ENCODE measurements at regions of chr2 and their contacts with region 1.

Region 1: GRCh38 chr2:219509780-219510511 is 4.3 kb upstream of the ASIC4 start:
- DNase-seq: peak in 1 of 2 experiments; percentile 91
- H3K4me3 ChIP-seq: peak overlapping the region; percentile 27 to 56 (median 50); a peak in 7 of 8 replicates
- H3K27ac ChIP-seq: no peak overlapping the region
- H3K4me1 ChIP-seq: peaks cover 7 to 76% (median 65%) of the 10 kb centered on the region in 4 experiments
- H3K27me3 ChIP-seq: peaks cover 2 to 37% (median 34%) of the 10 kb centered on the region in 4 experiments
- CTCF ChIP-seq: peak in 2 of 3 experiments; percentile 70 to 89; a peak in 3 of 4 replicates
- EP300 ChIP-seq: no peak
- POLR2A ChIP-seq: no peak
- RAD21 ChIP-seq: peak; percentile 38 to 57; a peak in 3 of 4 replicates

Region 2: GRCh38 chr2:219521066-219521880 is 11.3 kb after region 1 on chr2:
- CTCF ChIA-PET with region 1: interaction called, 488 read pairs
- POLR2A ChIA-PET with region 1: interaction called, 12 read pairs
- DNase-seq: peak in 1 of 2 experiments; percentile 86
- H3K4me3 ChIP-seq: peak overlapping the region in 1 of 4 experiments; percentile 63; a peak in 1 of 8 replicates
- H3K27ac ChIP-seq: no peak overlapping the region
- H3K4me1 ChIP-seq: peaks cover 0 to 28% (median 19%) of the 10 kb centered on the region in 4 experiments; a peak in 6 of 7 replicates
- H3K27me3 ChIP-seq: peaks cover 0 to 14% (median 4%) of the 10 kb centered on the region in 4 experiments; a peak in 3 of 7 replicates
- CTCF ChIP-seq: peak in 2 of 3 experiments; percentile 92 to 94; a peak in 3 of 4 replicates
- EP300 ChIP-seq: 0 out of 3 replicates have a peak, but pooled peaks of 1 of the 2 experiments have one; percentile 54
- POLR2A ChIP-seq: no peak
- RAD21 ChIP-seq: peak; percentile 64 to 79

Region 3: DNA sequence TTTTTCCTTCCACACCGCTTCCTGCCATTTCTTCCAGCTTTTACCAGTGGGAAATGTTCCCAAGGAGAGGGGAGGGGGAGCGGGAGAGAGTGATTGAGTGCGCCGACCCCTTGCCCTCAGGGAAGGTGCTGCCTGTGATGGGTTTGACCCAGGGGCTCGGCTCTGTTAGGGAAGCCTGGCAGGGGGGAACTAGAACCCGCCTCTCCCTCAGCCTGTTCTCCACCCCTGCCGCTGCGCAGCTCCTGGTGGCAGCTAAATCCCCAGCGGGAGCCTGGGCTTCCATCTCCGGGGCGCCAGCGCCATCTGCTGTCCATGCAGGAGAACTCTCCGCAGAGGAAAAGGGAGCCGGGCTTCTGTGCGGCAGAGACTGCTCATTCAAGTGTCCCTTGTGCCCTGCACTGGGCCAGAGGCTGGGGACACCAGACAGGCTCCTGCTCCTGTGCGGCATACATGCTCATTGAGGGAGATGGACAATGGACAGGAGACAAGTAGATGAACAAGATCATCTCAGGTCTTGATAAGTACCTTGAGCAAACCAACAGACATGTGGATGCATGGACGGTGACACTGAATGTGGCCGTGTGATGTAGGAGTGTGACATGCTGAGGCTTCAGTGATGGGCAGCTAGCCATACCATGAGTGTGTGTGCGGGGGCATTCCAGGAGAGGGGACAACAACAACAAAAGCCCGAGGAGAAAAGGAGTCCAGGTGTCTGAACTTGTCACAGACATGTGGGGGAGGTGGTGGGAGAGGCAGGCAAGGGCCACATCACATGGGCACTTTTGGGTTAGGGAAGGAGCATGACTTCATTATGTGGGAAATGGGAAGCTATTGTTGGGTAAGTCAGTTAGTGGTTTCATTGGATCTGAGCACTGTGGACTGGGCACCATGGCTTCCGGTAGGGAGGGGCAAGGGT is 20.4 kb after region 1 on chr2:
- CTCF ChIA-PET with region 1: interaction called, 488 read pairs
- POLR2A ChIA-PET with region 1: interaction called, 14 read pairs
- DNase-seq: peak in 1 of 2 experiments; percentile 97
- H3K4me3 ChIP-seq: peak overlapping the region in 2 of 4 experiments; percentile 22 to 56; a peak in 4 of 8 replicates
- H3K27ac ChIP-seq: no peak overlapping the region
- H3K4me1 ChIP-seq: peaks cover 0 to 8% (median 3%) of the 10 kb centered on the region in 4 experiments; a peak in 4 of 7 replicates
- H3K27me3 ChIP-seq: peaks cover 0 to 24% (median 10%) of the 10 kb centered on the region in 4 experiments; a peak in 6 of 7 replicates
- CTCF ChIP-seq: peak in 2 of 3 experiments; percentile 96 to 99; a peak in 3 of 4 replicates
- EP300 ChIP-seq: no peak
- POLR2A ChIP-seq: no peak
- RAD21 ChIP-seq: peak; percentile 99 to 100

Region 4: DNA sequence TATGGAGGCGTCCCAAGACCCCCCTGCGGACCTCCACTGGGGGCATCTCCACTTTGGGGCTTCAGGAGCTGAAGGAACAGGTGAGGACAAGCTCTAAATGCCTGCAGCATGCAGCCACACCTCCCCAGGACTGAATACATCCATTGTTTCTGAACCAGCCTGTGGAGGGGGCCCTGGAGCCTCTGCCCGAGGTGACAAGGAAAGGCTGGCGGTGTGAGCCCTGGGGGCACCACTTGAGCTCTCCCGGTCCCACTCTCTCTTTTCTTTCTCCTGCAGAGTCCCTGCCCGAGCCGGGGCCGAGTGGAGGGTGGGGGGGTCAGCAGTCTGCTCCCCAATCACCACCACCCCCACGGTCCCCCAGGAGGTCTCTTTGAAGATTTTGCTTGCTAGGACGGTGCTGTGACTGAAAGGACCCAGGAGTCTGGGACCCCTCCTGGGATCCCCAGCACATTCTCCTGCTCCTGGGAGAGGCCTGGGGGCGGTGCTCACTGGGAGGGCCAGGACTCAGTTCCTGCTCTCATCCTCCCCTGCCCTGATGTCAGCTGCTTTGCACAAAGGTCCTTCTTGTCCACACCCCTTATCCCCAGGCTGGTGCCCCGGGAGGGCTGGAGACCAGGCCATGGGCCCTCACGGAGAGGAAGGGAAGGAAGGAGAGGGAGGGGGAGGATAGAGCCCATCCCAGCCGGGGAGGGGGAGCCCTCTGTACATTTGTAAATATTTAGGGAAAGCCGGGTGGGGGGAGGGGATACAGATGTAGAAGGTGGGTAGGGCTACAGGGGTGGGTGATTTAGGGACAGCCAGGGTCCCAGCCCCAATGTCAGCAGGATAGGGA is 27.9 kb after region 1 on chr2:
- CTCF ChIA-PET with region 1: interaction called, 488 read pairs
- POLR2A ChIA-PET with region 1: interaction called, 3 read pairs
- DNase-seq: no peak
- H3K4me3 ChIP-seq: no peak overlapping the region
- H3K27ac ChIP-seq: no peak overlapping the region
- H3K4me1 ChIP-seq: peaks cover 5 to 25% (median 16%) of the 10 kb centered on the region in 4 experiments
- H3K27me3 ChIP-seq: no peaks in the 10 kb centered on the region; a peak in 1 of 7 replicates
- CTCF ChIP-seq: peak in 1 of 3 experiments; percentile 25; a peak in 1 of 4 replicates
- EP300 ChIP-seq: no peak
- POLR2A ChIP-seq: no peak
- RAD21 ChIP-seq: peak in 1 of 2 experiments; percentile 26; a peak in 1 of 4 replicates